Breast epithelium (tissue), 4 donors: ENCODE measurements at regions of chr1 and their contacts with region 1.

Region 1: GRCh38 chr1:203031467-203031866 is 5.2 kb downstream of the PPFIA4 start:
- DNase-seq: no peak
- H3K4me3 ChIP-seq: no peak overlapping the region
- H3K27ac ChIP-seq: no peak overlapping the region
- H3K4me1 ChIP-seq: peaks cover 0 to 6% of the 10 kb centered on the region in 2 donors
- H3K27me3 ChIP-seq: no peaks in the 10 kb centered on the region
- CTCF ChIP-seq: no peak
- POLR2A ChIP-seq: no peak

Region 2: GRCh38 chr1:202268032-202268431 is 763.4 kb before region 1 on chr1:
- intact Hi-C with region 1: loop called (anchors 5 kb)
- DNase-seq: peak in 1 of 2 donors; percentile 61
- H3K4me3 ChIP-seq: no peak overlapping the region
- H3K27ac ChIP-seq: peak overlapping the region; percentile 6 to 7
- H3K4me1 ChIP-seq: no peaks in the 10 kb centered on the region
- H3K27me3 ChIP-seq: no peaks in the 10 kb centered on the region
- CTCF ChIP-seq: no peak
- POLR2A ChIP-seq: no peak

Region 3: GRCh38 chr1:202926720-202927491 is 104.6 kb before region 1 on chr1 and contains the start of gene KLHL12:
- intact Hi-C with region 1: no loop called
- DNase-seq: peak; percentile 96 to 98
- H3K4me3 ChIP-seq: peak within 1 kb of the TSS; percentile 88 to 93 (median 90)
- H3K27ac ChIP-seq: peak within 1 kb of the TSS; percentile 96 to 97
- H3K4me1 ChIP-seq: no peaks in the 10 kb centered on the region
- H3K27me3 ChIP-seq: no peaks in the 10 kb centered on the region
- CTCF ChIP-seq: peak; percentile 53 to 83 (median 69)
- POLR2A ChIP-seq: peak; percentile 87
- total RNA-seq, gene KLHL12: 21.3 to 26.4 (median 25.5) TPM